ENCODE measurements at regions of chr12 and their contacts with region 1.

Region 1: GRCh38 chr12:62435303-62436163 is 31.1 kb upstream of the MON2 start:
- DNase-seq: peak; percentile 77 to 80
- ATAC-seq: peak; percentile 93 to 96
- H3K4me3 ChIP-seq: peak overlapping the region; percentile 51
- H3K27ac ChIP-seq: peak overlapping the region; percentile 0 to 49; a peak in 5 of 6 replicates
- H3K4me1 ChIP-seq: 0 out of 3 replicates have a peak, but pooled peaks cover 3% of the 10 kb centered on the region
- CTCF ChIP-seq: peak; percentile 61
- EP300 ChIP-seq: no peak
- POLR2A ChIP-seq: no peak
- RAD21 ChIP-seq: peak; percentile 36 to 42; a peak in 4 of 5 replicates

Region 2: GRCh38 chr12:62215506-62215905 is 220.0 kb before region 1 on chr12:
- CTCF ChIA-PET with region 1: no interaction called
- POLR2A ChIA-PET with region 1: no interaction called
- DNase-seq: no peak
- ATAC-seq: no peak
- H3K4me3 ChIP-seq: no peak overlapping the region
- H3K27ac ChIP-seq: no peak overlapping the region
- H3K4me1 ChIP-seq: no peaks in the 10 kb centered on the region
- CTCF ChIP-seq: no peak
- EP300 ChIP-seq: no peak
- POLR2A ChIP-seq: no peak
- RAD21 ChIP-seq: no peak

Region 3: DNA sequence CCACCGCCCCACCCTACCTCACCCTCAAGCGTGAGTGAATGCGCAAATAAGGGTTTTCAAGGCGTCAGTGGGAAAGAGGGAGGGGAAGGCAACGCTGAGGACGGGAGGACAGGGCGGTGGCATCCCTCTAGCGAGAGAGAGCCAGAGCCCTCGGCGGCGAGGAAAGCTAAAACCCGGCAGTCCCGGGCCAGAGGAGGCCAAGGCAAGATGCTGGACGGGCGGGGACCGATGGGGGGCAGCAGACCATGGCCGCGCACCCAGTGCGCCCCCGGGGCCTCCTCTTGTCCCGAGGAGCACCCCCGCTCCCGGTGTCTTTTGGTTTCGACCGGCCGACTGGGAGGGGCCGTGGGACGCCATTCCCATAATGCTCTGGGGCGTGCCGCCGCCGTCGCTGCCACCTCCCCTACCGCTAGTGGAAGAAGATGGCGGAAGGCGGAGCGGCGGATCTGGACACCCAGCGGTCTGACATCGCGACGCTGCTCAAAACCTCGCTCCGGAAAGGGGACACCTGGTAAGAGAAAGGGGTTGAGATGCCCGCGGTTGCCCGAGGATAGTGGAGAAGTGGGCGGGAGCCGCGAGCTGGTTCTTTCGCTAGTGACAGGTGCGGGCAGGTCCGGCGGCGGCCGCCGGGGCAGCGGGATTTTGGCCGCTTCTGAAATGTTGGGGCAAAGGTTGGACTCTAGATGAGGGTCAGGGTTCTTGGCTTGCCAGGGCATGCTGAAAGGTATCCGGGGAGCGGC is 175.4 kb before region 1 on chr12 and contains the start of gene USP15:
- CTCF ChIA-PET with region 1: interaction called, 10 read pairs
- POLR2A ChIA-PET with region 1: interaction called, 7 read pairs
- DNase-seq: peak; percentile 82 to 99
- ATAC-seq: peak; percentile 95 to 98
- H3K4me3 ChIP-seq: peak within 1 kb of the TSS; percentile 74
- H3K27ac ChIP-seq: peak within 1 kb of the TSS; percentile 90 to 93
- H3K4me1 ChIP-seq: peaks cover 23% of the 10 kb centered on the region; the same call in 2 of the 3 replicates
- CTCF ChIP-seq: peak; percentile 70
- EP300 ChIP-seq: no peak
- POLR2A ChIP-seq: peak; percentile 82
- RAD21 ChIP-seq: 0 out of 5 replicates have a peak, but pooled peaks of 1 of the 2 experiments have one; percentile 7
- polyA plus RNA-seq, gene USP15: 56.4 and 67.6 TPM in 2 replicates

Region 4: DNA sequence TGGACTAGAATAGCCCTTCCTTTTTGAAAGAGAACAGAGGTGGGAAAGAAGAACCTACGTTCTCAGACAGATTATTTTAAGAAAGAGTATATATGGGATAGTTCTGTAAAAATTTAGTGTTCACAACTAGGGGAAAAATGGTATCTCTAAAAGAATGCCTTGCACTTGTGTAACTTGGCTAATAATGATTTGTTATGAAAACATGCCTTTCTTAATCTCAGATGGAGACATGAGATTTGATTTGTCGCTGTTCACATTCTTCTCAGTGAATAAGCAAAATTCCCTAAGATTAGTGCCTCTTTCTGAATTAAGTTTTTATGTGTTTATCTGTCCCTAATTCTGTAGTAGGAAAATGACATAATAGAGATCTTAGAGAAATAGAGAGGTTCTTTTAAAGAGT is 74.5 kb before region 1 on chr12:
- CTCF ChIA-PET with region 1: no interaction called
- POLR2A ChIA-PET with region 1: no interaction called
- DNase-seq: no peak
- ATAC-seq: no peak
- H3K4me3 ChIP-seq: no peak overlapping the region
- H3K27ac ChIP-seq: no peak overlapping the region
- H3K4me1 ChIP-seq: no peaks in the 10 kb centered on the region
- CTCF ChIP-seq: no peak
- EP300 ChIP-seq: no peak
- POLR2A ChIP-seq: no peak
- RAD21 ChIP-seq: no peak

Region 5: DNA sequence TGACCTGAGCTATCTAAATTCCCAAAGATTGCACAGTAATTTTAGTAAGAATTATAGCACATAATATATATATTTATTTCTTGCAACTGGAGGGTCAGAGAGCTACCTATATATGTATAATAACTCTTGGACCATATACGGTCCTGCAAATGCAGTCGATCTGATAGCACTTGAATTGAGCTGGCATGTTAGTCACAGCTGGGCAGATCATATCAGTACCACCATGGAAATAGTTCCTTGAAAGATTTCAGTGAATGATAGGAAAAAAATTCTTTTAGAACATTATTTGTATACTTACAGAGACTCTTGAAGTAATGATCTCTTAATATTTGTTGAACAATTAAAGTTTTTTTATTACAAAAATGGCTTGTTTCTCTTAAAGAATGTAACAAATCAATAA is 63.4 kb before region 1 on chr12:
- CTCF ChIA-PET with region 1: no interaction called
- POLR2A ChIA-PET with region 1: no interaction called
- DNase-seq: no peak
- ATAC-seq: no peak
- H3K4me3 ChIP-seq: no peak overlapping the region
- H3K27ac ChIP-seq: no peak overlapping the region
- H3K4me1 ChIP-seq: no peaks in the 10 kb centered on the region
- CTCF ChIP-seq: no peak
- EP300 ChIP-seq: no peak
- POLR2A ChIP-seq: no peak
- RAD21 ChIP-seq: no peak

Region 6: DNA sequence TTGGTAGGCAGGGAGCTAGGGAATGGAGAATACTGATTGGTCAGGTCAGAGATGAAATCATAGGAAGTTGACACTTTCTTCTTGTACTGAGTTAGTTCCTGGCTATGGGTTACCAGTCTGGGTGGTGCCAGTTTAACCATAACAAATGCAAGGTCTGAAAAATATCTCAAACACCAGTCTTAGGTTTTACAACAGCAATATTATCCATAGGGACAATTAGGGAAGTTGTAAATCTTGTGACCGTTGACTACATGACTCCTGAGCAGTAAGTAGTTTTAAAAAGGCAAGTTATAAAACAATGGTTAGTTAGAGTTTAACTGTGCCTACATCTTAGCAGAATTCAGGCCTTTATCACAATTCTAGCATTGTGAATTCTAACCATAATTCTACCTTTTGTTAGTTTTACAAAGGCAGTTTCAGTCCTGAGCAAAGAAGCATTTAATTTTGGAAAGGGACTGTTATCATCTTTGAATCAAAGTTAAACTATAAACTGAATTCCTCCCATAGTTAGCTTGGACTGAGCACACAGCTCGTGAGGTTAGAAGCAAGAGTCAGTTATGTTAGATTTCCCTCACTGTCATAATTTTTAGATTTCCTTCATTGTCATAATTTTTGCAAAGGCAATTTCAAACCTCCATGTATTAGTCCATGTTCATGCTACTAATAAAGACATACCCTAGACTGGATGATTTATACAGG is 11.4 kb after region 1 on chr12:
- CTCF ChIA-PET with region 1: interaction called, 23 read pairs
- POLR2A ChIA-PET with region 1: no interaction called
- DNase-seq: no peak
- ATAC-seq: no peak
- H3K4me3 ChIP-seq: no peak overlapping the region
- H3K27ac ChIP-seq: no peak overlapping the region
- H3K4me1 ChIP-seq: no peaks in the 10 kb centered on the region
- CTCF ChIP-seq: no peak
- EP300 ChIP-seq: no peak
- POLR2A ChIP-seq: no peak
- RAD21 ChIP-seq: no peak

Region 7: GRCh38 chr12:62466018-62466593 is 30.6 kb after region 1 on chr12:
- CTCF ChIA-PET with region 1: interaction called, 11 read pairs
- POLR2A ChIA-PET with region 1: interaction called, 3 read pairs
- DNase-seq: peak; percentile 19 to 44
- ATAC-seq: peak; percentile 68 to 76
- H3K4me3 ChIP-seq: peak overlapping the region; percentile 84
- H3K27ac ChIP-seq: peak overlapping the region; percentile 92 to 96
- H3K4me1 ChIP-seq: peaks cover 17% of the 10 kb centered on the region
- CTCF ChIP-seq: no peak
- EP300 ChIP-seq: no peak
- POLR2A ChIP-seq: no peak
- RAD21 ChIP-seq: no peak

Region 8: GRCh38 chr12:62813031-62813829 is 377.7 kb after region 1 on chr12:
- CTCF ChIA-PET with region 1: interaction called, 15 read pairs
- POLR2A ChIA-PET with region 1: no interaction called
- DNase-seq: peak; percentile 58 to 83
- ATAC-seq: peak; percentile 92 to 95
- H3K4me3 ChIP-seq: no peak overlapping the region; the same call in 2 of the 3 replicates
- H3K27ac ChIP-seq: peak overlapping the region; percentile 51 to 76; a peak in 5 of 6 replicates
- H3K4me1 ChIP-seq: peaks cover 5% of the 10 kb centered on the region; the same call in 2 of the 3 replicates
- CTCF ChIP-seq: peak; percentile 89
- EP300 ChIP-seq: no peak
- POLR2A ChIP-seq: no peak
- RAD21 ChIP-seq: peak; percentile 89 to 93